Activated naive CD8-positive, alpha-beta T cell treated with anti-CD3 and anti-CD28 coated beads, Interleukin-2, amount 10 ng/mL, durations not matched to agents 7 days and 5 days (primary cell): ENCODE measurements at regions of chr6 and their contacts with region 1.

Region 1: DNA sequence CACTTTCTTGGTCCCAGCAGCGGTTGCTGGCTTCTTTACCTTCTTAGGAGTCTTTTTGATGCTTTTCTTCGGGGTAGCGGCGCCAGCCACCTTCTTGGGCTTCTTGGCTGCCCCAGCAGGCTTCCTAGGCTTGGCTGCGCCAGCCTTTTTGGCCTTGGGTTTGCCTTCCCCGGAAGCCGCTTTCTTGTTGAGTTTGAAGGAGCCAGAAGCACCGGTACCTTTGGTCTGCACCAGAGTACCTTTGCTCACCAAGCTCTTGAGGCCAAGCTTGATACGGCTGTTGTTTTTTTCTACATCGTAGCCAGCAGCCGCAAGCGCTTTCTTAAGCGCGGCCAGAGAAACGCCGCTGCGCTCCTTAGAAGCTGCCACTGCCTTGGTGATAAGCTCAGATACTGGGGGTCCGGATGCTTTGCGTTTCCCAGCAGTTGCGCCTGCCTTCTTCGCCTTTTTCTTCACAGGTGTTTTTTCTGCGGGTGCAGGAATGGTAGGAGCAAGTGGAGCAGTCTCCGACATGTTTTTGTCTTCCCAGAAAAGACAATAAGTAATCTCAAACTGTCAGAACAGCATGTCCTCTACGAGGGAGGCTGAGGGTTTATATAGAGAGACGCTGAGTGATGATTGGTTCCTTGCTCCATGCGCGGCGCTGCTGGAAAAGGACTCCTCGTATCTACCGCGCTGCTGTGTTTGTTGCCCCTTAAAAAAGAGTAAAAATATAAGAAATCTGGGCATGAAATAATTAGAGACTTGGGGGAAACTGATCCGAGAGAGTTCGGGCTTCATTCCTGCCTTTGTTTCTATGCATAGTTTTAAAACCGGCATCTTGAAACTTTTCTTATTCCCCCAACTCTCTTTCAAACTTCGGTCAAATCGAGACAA is 130.3 kb upstream of the BTN3A2 start:
- DNase-seq: peak; percentile 76
- ATAC-seq: peak; percentile 59
- H3K4me3 Mint-ChIP-seq: peak overlapping the region; percentile 94
- H3K27ac Mint-ChIP-seq: peak overlapping the region; percentile 100
- H3K4me1 Mint-ChIP-seq: peaks cover 36% of the 10 kb centered on the region
- H3K27me3 Mint-ChIP-seq: no peaks in the 10 kb centered on the region

Region 2: DNA sequence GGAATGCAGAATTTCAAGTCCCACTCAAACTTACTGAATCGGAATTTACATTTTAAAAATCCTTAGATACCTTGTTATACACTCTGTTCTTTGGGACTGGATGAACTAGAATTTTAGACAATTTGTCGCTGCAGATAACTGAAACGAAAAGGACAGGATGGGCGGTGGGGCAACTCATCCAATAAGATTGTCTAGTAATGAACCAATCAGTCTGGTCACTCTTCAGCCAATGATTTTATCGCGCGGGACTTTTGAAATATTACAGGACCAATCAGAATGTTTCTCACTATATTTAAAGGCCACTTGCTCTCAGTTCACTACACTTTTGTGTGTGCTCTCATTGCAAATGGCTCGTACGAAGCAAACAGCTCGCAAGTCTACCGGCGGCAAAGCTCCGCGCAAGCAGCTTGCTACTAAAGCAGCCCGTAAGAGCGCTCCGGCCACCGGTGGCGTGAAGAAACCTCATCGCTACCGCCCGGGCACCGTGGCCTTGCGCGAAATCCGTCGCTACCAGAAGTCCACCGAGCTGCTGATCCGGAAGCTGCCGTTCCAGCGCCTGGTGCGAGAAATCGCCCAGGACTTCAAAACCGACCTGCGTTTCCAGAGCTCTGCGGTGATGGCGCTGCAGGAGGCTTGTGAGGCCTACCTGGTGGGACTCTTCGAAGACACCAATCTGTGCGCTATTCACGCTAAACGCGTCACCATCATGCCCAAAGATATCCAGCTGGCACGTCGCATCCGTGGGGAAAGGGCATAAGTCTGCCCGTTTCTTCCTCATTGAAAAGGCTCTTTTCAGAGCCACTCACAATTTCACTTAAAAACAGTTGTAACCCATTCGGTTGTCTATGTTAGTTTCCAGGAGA is 189.4 kb before region 1 on chr6:
- POLR2A ChIA-PET with region 1: interaction called, 82 read pairs
- DNase-seq: peak; percentile 82
- ATAC-seq: peak; percentile 56
- H3K4me3 Mint-ChIP-seq: peak overlapping the region; percentile 86
- H3K27ac Mint-ChIP-seq: peak overlapping the region; percentile 99
- H3K4me1 Mint-ChIP-seq: peaks cover 41% of the 10 kb centered on the region
- H3K27me3 Mint-ChIP-seq: no peaks in the 10 kb centered on the region

Region 3: GRCh38 chr6:26183581-26184366 is 50.9 kb before region 1 on chr6:
- POLR2A ChIA-PET with region 1: interaction called, 190 read pairs
- DNase-seq: peak; percentile 78
- ATAC-seq: peak; percentile 85
- H3K4me3 Mint-ChIP-seq: peak overlapping the region; percentile 96
- H3K27ac Mint-ChIP-seq: peak overlapping the region; percentile 99
- H3K4me1 Mint-ChIP-seq: peaks cover 48% of the 10 kb centered on the region
- H3K27me3 Mint-ChIP-seq: no peaks in the 10 kb centered on the region

Region 4: DNA sequence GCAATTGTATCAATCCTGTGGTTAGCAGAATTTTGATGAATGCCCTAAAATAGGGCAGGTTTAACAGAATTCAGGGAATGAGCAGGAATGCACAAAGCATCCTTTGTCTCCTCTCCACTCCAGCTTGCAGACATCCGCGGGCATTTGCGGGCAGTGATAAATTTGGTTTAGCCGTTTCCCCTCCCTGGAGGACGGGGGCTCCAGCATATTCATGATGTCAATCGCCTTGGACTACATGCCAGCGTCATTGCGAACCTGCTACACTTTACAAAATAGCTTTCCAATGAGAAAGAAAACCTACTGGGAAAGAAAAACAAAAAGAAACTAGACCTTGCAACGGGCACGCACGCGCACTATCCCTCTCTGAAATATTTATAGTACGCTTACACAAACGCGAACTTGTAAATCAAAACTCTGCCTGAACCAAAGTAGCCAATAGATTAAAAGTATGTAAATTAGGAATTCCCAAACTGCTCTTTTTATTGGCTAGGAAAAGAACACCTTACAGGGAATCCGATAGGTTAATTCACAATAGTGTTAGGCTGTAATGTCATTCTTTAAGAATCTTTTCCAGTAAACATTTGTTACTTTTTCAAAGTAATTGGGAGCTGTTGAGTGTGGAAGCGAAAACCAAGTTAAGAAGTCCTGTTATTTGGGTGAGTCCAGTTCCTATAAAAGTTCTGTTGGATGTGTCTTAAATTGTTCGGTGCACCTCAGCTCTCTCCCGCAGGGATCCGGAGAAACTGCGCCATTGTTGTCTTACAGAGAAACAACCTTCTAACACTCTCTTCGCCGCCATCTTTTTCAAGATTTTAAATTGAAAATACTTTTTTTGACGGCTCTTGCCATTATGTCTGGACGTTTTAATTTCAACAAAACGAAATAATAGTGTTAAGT is 10.8 kb before region 1 on chr6:
- POLR2A ChIA-PET with region 1: interaction called, 425 read pairs
- DNase-seq: peak; percentile 59
- ATAC-seq: peak; percentile 77
- H3K4me3 Mint-ChIP-seq: no peak overlapping the region
- H3K27ac Mint-ChIP-seq: no peak overlapping the region
- H3K4me1 Mint-ChIP-seq: peaks cover 29% of the 10 kb centered on the region
- H3K27me3 Mint-ChIP-seq: no peaks in the 10 kb centered on the region

Region 5: GRCh38 chr6:27146706-27147505 is 912.2 kb after region 1 on chr6:
- POLR2A ChIA-PET with region 1: interaction called, 19 read pairs
- DNase-seq: peak; percentile 83
- ATAC-seq: peak; percentile 71
- H3K4me3 Mint-ChIP-seq: no peak overlapping the region
- H3K27ac Mint-ChIP-seq: no peak overlapping the region
- H3K4me1 Mint-ChIP-seq: peaks cover 18% of the 10 kb centered on the region
- H3K27me3 Mint-ChIP-seq: no peaks in the 10 kb centered on the region

Region 6: GRCh38 chr6:27871924-27872638 is 1637.4 kb after region 1 on chr6:
- POLR2A ChIA-PET with region 1: interaction called, 60 read pairs
- DNase-seq: peak; percentile 80
- ATAC-seq: peak; percentile 63
- H3K4me3 Mint-ChIP-seq: peak overlapping the region; percentile 92
- H3K27ac Mint-ChIP-seq: peak overlapping the region; percentile 93
- H3K4me1 Mint-ChIP-seq: peaks cover 44% of the 10 kb centered on the region
- H3K27me3 Mint-ChIP-seq: no peaks in the 10 kb centered on the region